Caco-2 (cell line): ENCODE measurements at regions of chr5 and their contacts with region 1.

Region 1: DNA sequence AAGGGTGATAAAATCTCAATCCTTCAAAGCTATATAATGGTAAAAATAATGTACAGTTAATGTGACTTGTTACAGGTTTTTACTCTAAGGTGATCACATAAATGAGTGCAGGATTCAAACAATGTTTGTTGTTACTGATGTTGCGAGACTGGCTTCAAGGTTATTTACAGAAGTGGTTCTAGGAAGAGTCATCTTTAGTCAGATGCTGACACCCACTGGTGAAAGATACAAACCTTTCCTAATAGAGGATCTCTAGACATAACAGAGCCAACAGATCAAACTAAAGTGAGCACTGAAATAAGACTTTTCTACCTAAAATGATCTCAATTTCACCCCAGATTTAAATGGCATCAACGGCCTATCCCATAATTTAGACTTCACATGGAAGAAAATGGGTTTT is 20.2 kb downstream of the ARSB start:
- DNase-seq: peak in 1 of 2 experiments; percentile 62
- H3K4me3 ChIP-seq: no peak overlapping the region
- H3K4me3 Mint-ChIP-seq: no peak overlapping the region
- H3K27ac Mint-ChIP-seq: no peak overlapping the region
- H3K4me1 ChIP-seq: no peaks in the 10 kb centered on the region
- H3K4me1 Mint-ChIP-seq: no peaks in the 10 kb centered on the region
- H3K27me3 ChIP-seq: no peaks in the 10 kb centered on the region
- H3K27me3 Mint-ChIP-seq: no peaks in the 10 kb centered on the region
- CTCF ChIP-seq: peak; percentile 30 to 56

Region 2: GRCh38 chr5:78467752-78468357 is 497.0 kb before region 1 on chr5:
- CTCF ChIA-PET with region 1: no interaction called
- POLR2A ChIA-PET with region 1: no interaction called
- intact Hi-C with region 1: loop called (anchors 2 kb)
- DNase-seq: peak in 1 of 2 experiments; percentile 17
- H3K4me3 ChIP-seq: no peak overlapping the region
- H3K4me3 Mint-ChIP-seq: no peak overlapping the region
- H3K27ac Mint-ChIP-seq: no peak overlapping the region
- H3K4me1 ChIP-seq: no peaks in the 10 kb centered on the region
- H3K4me1 Mint-ChIP-seq: no peaks in the 10 kb centered on the region
- H3K27me3 ChIP-seq: no peaks in the 10 kb centered on the region
- H3K27me3 Mint-ChIP-seq: no peaks in the 10 kb centered on the region
- CTCF ChIP-seq: peak; percentile 62 to 73

Region 3: GRCh38 chr5:78638423-78638822 is 326.5 kb before region 1 on chr5:
- CTCF ChIA-PET with region 1: no interaction called
- POLR2A ChIA-PET with region 1: no interaction called
- intact Hi-C with region 1: loop called (anchors 5 kb)
- DNase-seq: peak; percentile 69 to 82
- H3K4me3 ChIP-seq: no peak overlapping the region
- H3K4me3 Mint-ChIP-seq: no peak overlapping the region
- H3K27ac Mint-ChIP-seq: no peak overlapping the region
- H3K4me1 ChIP-seq: peaks cover 34% of the 10 kb centered on the region
- H3K4me1 Mint-ChIP-seq: peaks cover 46% of the 10 kb centered on the region
- H3K27me3 ChIP-seq: no peaks in the 10 kb centered on the region
- H3K27me3 Mint-ChIP-seq: no peaks in the 10 kb centered on the region
- CTCF ChIP-seq: no peak

Region 4: DNA sequence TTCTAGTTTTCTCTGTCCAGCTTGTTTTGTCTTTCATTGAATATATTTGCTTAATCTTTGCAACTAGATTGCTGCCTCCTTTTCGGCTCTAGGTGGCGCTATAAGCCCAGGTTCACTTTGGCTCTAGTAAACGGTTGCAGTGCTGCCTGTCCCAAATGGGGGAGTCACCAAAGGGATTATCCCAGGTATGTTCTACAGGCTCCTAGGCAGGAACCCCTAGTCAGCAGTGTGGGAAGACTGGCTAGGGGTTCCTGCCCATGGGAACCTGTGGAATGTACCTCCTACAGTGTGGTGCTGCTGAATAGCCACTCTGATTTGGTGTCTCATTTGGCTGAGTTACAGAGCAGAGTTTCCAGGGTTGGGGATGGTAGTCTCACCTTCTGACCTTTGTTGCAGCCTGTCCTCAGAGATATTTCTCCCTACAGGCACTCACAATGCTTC is 64.9 kb before region 1 on chr5:
- CTCF ChIA-PET with region 1: interaction called, 18 read pairs
- POLR2A ChIA-PET with region 1: no interaction called
- intact Hi-C with region 1: loop called (anchors 1 kb)
- DNase-seq: peak; percentile 71
- H3K4me3 ChIP-seq: no peak overlapping the region
- H3K4me3 Mint-ChIP-seq: no peak overlapping the region
- H3K27ac Mint-ChIP-seq: no peak overlapping the region
- H3K4me1 ChIP-seq: 0 out of 2 replicates have a peak, but pooled peaks cover 4% of the 10 kb centered on the region
- H3K4me1 Mint-ChIP-seq: no peaks in the 10 kb centered on the region
- H3K27me3 ChIP-seq: no peaks in the 10 kb centered on the region
- H3K27me3 Mint-ChIP-seq: no peaks in the 10 kb centered on the region
- CTCF ChIP-seq: peak; percentile 69 to 86

Region 5: GRCh38 chr5:78927657-78928282 is 37.1 kb before region 1 on chr5:
- CTCF ChIA-PET with region 1: interaction called, 3 read pairs
- POLR2A ChIA-PET with region 1: no interaction called
- intact Hi-C with region 1: loop called (anchors 1 kb)
- DNase-seq: peak; percentile 69 to 79
- H3K4me3 ChIP-seq: no peak overlapping the region
- H3K4me3 Mint-ChIP-seq: peak overlapping the region; percentile 11
- H3K27ac Mint-ChIP-seq: peak overlapping the region; percentile 79
- H3K4me1 ChIP-seq: peaks cover 29% of the 10 kb centered on the region
- H3K4me1 Mint-ChIP-seq: peaks cover 33% of the 10 kb centered on the region
- H3K27me3 ChIP-seq: no peaks in the 10 kb centered on the region
- H3K27me3 Mint-ChIP-seq: no peaks in the 10 kb centered on the region
- CTCF ChIP-seq: no peak

Region 6: GRCh38 chr5:79305706-79306105 is 340.8 kb after region 1 on chr5:
- CTCF ChIA-PET with region 1: no interaction called
- POLR2A ChIA-PET with region 1: no interaction called
- intact Hi-C with region 1: no loop called
- DNase-seq: no peak
- H3K4me3 ChIP-seq: no peak overlapping the region
- H3K4me3 Mint-ChIP-seq: no peak overlapping the region
- H3K27ac Mint-ChIP-seq: no peak overlapping the region
- H3K4me1 ChIP-seq: no peaks in the 10 kb centered on the region
- H3K4me1 Mint-ChIP-seq: no peaks in the 10 kb centered on the region
- H3K27me3 ChIP-seq: no peaks in the 10 kb centered on the region
- H3K27me3 Mint-ChIP-seq: no peaks in the 10 kb centered on the region
- CTCF ChIP-seq: no peak